Thyroid gland (tissue), 4 donors: ENCODE measurements at regions of chr3 and their contacts with region 1.

Region 1: DNA sequence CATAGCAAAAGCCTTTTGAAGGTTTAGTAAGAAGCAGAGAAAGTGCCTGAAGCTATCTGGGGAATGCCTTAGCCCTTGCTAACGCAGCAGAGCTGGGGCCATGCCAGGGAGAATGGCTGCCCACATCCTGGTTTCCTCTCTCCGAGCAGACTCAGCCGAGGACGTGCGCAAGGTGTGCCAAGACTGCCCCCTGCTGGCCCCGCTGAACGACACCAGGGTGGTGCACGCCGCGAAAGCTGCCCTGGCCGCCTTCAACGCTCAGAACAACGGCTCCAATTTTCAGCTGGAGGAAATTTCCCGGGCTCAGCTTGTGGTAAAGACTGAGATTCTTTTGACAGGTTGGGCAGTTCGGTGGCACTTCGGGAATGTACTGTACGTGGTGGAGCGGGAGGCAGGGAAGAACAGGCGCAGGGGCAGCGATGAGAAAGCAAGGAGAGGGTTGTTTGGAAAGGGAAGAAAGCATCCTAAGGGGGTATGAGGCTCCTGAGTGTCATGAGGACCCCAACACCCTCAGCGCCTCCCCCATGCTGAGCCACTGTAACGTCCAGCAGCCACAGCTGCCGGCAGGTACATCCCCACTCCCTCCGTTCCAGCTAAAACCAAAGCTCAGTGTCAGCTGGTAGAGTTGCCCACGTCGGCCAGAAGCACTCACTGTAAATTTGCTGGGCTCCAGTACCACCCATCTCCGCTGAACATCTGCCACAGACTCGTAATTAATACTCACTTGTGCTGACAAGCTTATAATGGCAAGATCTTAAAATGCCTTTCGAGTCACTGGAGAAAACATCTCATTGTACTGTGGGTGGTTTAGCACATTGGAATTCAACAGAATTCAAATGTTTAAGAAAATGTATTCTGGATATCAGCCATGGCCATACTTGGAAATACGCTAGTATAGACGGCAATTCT is 4.4 kb downstream of the AHSG start:
- DNase-seq: peak; percentile 87 to 90
- H3K4me3 ChIP-seq: no peak overlapping the region
- H3K27ac ChIP-seq: no peak overlapping the region
- H3K4me1 ChIP-seq: peaks cover 3 to 9% of the 10 kb centered on the region in 2 donors
- H3K27me3 ChIP-seq: no peaks in the 10 kb centered on the region
- CTCF ChIP-seq: peak; percentile 55 to 89 (median 72)
- POLR2A ChIP-seq: no peak

Region 2: GRCh38 chr3:186759231-186759930 is 142.1 kb after region 1 on chr3:
- intact Hi-C with region 1: loop called (anchors 10 kb)
- DNase-seq: no peak
- H3K4me3 ChIP-seq: no peak overlapping the region
- H3K27ac ChIP-seq: no peak overlapping the region
- H3K4me1 ChIP-seq: no peaks in the 10 kb centered on the region
- H3K27me3 ChIP-seq: no peaks in the 10 kb centered on the region
- CTCF ChIP-seq: no peak
- POLR2A ChIP-seq: no peak

Region 3: DNA sequence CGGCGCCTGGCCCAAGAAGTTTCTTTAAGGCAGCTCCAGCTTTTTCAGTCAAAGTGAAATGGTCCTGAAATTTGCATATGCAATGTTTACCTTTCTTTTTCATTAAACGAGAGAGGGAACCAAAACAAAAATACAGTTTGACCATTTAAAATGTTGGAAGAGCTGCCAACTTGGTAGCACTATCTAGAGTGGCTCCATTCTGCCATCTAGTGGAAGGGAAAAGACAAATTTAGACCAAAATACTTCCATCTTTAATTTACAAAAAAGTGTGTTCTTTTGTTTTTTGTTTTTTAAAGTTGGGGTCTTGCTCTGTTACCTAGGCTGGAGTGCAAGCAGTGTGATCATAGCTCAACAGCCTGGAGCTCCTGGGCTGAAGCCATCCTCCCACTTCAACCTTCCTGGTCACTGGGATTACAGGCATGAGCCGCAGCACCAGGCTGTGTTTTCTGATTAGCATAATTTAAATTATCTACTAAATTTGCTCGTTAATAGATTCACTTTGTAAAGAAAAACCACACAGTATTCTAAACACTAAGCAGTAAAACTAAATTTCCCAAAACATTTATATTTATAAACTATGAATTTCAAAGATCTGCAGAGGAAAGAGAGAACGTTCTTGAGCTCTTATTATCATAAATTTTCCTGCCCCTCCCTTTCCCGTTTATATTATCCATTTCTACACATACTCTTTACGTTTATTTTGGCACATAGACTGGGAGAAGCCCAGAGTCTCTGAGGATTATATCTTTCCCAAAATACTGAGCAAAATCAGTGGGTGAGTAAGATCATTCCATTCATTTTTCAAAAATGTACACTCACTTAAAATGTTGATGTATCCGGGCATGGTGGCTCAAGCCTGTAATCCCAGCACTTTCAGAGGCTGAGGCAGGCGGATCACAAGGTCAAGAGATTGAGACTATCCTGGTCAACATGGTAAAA is 204.4 kb after region 1 on chr3:
- intact Hi-C with region 1: loop called (anchors 5 kb)
- DNase-seq: no peak
- H3K4me3 ChIP-seq: no peak overlapping the region
- H3K27ac ChIP-seq: no peak overlapping the region
- H3K4me1 ChIP-seq: peaks cover 0 to 14% of the 10 kb centered on the region in 2 donors
- H3K27me3 ChIP-seq: peaks cover 19% of the 10 kb centered on the region
- CTCF ChIP-seq: peak; percentile 29 to 72 (median 60)
- POLR2A ChIP-seq: no peak

Region 4: DNA sequence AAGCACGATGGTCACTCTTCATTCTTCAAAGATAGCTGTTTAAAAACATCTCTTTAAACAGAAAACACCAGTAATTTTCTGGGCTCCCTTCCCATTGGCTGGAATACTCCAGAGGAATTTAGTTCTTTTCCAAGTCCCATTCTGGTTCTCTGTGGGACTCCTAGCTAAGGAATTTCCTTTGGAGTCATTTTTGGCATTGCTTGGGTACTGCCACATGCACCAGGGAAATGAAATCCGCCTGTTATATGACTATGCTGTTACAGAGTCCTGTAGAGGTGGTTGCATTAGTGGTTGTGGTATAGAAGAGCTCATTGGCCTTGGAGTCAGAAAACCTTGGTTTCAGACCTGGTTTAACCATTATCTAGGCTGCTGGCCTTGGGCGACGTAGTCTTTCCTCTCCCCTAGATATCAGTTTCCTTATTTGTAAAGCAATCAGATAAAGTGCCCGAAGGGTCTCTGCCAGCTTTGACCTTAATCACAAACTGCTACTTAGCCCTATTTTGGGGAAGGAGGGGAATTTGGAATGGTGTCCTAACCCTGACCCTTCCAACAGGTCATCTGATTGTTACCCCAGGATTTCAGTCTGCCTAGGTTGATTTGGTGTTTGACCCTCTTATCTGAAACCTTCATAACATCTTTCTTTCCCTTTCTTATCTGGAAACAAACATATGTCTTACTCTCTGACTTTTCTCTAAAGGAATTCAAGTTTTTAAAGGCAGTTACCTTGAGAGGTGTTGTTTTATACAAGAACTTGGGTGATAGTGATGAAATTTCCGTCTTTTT is 593.4 kb after region 1 on chr3:
- intact Hi-C with region 1: no loop called
- DNase-seq: no peak
- H3K4me3 ChIP-seq: no peak overlapping the region
- H3K27ac ChIP-seq: no peak overlapping the region
- H3K4me1 ChIP-seq: peaks cover 12 to 23% of the 10 kb centered on the region in 2 donors
- H3K27me3 ChIP-seq: no peaks in the 10 kb centered on the region
- CTCF ChIP-seq: no peak
- POLR2A ChIP-seq: no peak